SK-N-SH (cell line): ENCODE measurements at regions of chr2 and their contacts with region 1.

Region 1: GRCh38 chr2:44479122-44479887 is 117.6 kb downstream of the CAMKMT start:
- DNase-seq: peak; percentile 81
- H3K4me3 ChIP-seq: peak overlapping the region in 1 of 2 experiments; percentile 23; a peak in 1 of 4 replicates
- H3K27ac ChIP-seq: peak overlapping the region in 1 of 2 experiments; percentile 65; a peak in 2 of 4 replicates
- H3K4me1 ChIP-seq: peaks cover 0 to 12% of the 10 kb centered on the region in 2 experiments; a peak in 2 of 4 replicates
- H3K27me3 ChIP-seq: no peaks in the 10 kb centered on the region
- CTCF ChIP-seq: peak; percentile 100
- EP300 ChIP-seq: peak; percentile 15 to 49; a peak in 1 of 4 replicates
- RAD21 ChIP-seq: peak; percentile 100

Region 2: DNA sequence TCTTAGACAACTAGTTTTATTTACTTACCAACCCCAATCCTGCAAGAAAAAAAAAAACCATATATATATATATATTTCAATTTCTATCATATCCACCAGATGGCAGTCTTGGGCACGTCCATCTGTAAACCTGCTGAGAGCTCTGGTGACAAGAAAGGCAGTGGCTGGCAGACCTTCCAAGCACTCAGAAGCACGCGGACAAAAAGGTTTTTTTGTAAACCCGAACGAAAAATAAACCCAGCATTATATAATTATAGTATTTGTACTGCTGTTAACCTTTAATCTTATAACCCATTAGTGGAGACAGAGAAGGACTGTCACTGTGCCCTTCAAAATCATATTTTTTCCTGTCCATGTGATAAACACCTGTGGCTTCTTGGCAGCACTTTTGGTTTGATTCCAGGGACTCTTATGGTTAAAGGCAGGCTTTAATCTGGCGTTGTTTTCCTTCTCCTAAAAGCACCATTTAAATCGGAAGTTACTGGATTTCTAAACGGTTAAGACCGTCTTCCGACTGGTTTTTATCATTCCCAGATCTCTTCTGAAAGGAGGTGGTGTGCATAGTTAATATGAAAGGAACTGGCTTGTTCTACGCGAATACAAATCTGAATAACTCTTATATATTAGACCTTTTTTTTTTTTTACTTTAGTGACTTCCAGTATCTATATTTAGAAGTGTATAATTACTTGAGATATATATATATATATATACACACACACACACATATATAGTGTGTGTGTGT is 235.0 kb before region 1 on chr2:
- CTCF ChIA-PET with region 1: interaction called, 14 read pairs
- POLR2A ChIA-PET with region 1: no interaction called
- DNase-seq: peak; percentile 75
- H3K4me3 ChIP-seq: peak overlapping the region; percentile 43 to 55
- H3K27ac ChIP-seq: no peak overlapping the region
- H3K4me1 ChIP-seq: peaks cover 3 to 5% of the 10 kb centered on the region in 2 experiments; a peak in 2 of 4 replicates
- H3K27me3 ChIP-seq: no peaks in the 10 kb centered on the region
- CTCF ChIP-seq: peak; percentile 70
- EP300 ChIP-seq: no peak
- RAD21 ChIP-seq: peak; percentile 72

Region 3: DNA sequence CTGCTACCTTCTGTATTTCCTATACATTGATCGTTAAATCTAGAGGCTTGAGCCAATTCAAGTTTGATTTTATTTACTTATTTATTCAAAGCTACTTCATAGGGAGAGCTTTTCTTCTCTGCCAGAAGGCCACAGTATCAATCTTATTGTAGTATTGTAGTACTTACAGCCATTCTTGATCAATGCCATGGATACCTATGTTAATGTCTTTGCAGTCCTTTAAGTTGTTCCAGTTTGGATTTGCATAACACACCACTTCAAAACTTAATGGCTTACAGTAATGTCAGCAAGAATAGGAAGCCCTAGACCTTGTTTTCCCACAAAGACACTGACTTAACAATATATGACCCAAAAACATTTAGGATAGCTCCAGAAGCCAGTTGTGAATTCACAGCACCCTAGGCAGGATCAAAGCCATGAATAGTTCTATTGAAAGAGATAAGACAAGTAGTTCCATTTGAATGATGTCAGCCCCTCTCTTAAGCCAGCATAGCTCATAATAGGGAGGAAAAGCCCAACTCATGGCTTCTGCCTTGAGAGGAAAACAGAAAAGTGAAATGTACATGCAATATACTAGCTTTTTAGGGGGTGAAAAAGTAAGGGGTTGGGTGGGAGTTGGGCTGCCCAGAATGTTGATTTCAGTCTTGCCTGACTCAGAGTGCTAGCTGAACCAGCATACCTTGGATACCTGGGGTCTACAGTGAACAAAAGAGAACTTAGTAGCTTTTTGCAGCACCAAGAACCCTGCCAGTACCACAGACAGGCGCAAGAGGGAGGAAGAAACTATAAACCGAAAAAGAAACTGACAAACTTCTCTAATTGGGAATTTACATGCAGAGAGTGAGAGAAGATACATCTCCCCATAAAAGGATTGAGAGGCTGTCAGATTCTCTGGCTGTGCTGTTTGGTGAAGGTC is 16.1 kb before region 1 on chr2:
- CTCF ChIA-PET with region 1: interaction called, 81 read pairs
- POLR2A ChIA-PET with region 1: no interaction called
- DNase-seq: no peak
- H3K4me3 ChIP-seq: no peak overlapping the region
- H3K27ac ChIP-seq: no peak overlapping the region
- H3K4me1 ChIP-seq: peaks cover 0 to 8% of the 10 kb centered on the region in 2 experiments; a peak in 1 of 4 replicates
- H3K27me3 ChIP-seq: no peaks in the 10 kb centered on the region
- CTCF ChIP-seq: no peak
- EP300 ChIP-seq: no peak
- RAD21 ChIP-seq: no peak

Region 4: DNA sequence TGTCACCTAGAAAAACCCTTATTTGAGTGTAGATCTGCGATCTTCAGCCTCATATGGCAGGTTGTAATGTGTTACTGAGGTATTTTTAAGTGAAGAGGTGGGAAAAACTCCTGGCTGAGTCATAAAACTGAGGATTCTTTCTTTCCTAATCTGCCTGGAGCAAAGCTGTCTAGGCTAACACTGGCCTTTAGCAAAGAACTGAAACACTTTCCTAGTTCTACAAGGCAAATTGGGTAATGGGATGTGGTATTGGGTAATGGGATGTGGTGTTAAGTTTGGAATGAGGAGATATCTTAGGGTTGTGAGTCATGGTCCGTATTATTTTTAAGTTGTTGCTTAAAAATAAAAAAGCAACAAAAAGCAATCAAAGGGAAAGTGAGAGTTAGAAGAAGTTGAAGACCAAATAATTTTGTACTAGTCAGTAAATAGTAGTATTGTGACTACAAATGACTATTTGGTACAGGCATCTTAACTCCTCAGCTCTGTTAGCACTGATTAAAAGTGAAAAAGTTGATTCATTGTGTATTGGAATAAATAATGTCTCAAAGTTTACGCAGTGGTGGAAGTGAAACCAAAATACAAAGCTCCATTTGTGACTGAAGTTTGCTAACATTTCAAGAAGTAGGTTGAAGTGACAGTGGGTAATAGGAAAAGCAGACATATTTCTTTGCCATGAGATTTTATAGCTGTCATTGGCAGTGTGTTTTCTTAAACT is 99.3 kb after region 1 on chr2:
- CTCF ChIA-PET with region 1: interaction called, 29 read pairs
- POLR2A ChIA-PET with region 1: no interaction called
- DNase-seq: no peak
- H3K4me3 ChIP-seq: no peak overlapping the region
- H3K27ac ChIP-seq: no peak overlapping the region
- H3K4me1 ChIP-seq: peaks cover 2 to 6% of the 10 kb centered on the region in 2 experiments; a peak in 2 of 4 replicates
- H3K27me3 ChIP-seq: no peaks in the 10 kb centered on the region
- CTCF ChIP-seq: no peak
- EP300 ChIP-seq: no peak
- RAD21 ChIP-seq: no peak

Region 5: DNA sequence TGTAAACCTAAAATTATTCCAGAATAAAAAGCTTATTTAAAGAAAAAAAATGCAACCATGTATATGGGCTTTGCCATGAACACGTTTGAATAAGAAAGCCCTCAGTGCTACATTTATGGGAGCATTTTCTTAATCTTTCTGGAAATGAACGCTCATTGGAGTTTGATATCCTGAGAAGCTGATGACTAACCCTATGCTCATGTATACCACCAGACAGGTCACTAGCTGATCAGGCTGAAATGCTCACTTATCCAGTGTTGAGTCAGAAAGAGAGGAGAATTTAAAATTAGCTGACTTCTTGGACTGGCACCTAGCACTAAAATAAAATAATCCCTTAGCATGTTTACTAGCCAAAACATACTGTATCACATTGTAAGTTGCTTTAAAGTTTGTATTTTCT is 207.3 kb after region 1 on chr2:
- CTCF ChIA-PET with region 1: interaction called, 66 read pairs
- POLR2A ChIA-PET with region 1: interaction called, 3 read pairs
- DNase-seq: no peak
- H3K4me3 ChIP-seq: no peak overlapping the region
- H3K27ac ChIP-seq: peak overlapping the region; percentile 22 to 69; a peak in 3 of 4 replicates
- H3K4me1 ChIP-seq: peaks cover 4 to 75% of the 10 kb centered on the region in 2 experiments; a peak in 2 of 4 replicates
- H3K27me3 ChIP-seq: no peaks in the 10 kb centered on the region
- CTCF ChIP-seq: no peak
- EP300 ChIP-seq: no peak
- RAD21 ChIP-seq: no peak

Region 6: GRCh38 chr2:44770221-44771195 is 291.2 kb after region 1 on chr2:
- CTCF ChIA-PET with region 1: interaction called, 88 read pairs
- POLR2A ChIA-PET with region 1: no interaction called
- DNase-seq: peak; percentile 64
- H3K4me3 ChIP-seq: no peak overlapping the region
- H3K27ac ChIP-seq: peak overlapping the region in 1 of 2 experiments; percentile 99; a peak in 2 of 4 replicates
- H3K4me1 ChIP-seq: peaks cover 0 to 91% of the 10 kb centered on the region in 2 experiments; a peak in 3 of 4 replicates
- H3K27me3 ChIP-seq: no peaks in the 10 kb centered on the region
- CTCF ChIP-seq: no peak; the same call in 1 of the 2 replicates
- EP300 ChIP-seq: no peak
- RAD21 ChIP-seq: peak; percentile 46

Region 7: GRCh38 chr2:44974064-44974715 is 494.9 kb after region 1 on chr2:
- CTCF ChIA-PET with region 1: interaction called, 42 read pairs
- POLR2A ChIA-PET with region 1: no interaction called
- DNase-seq: peak; percentile 83
- H3K4me3 ChIP-seq: no peak overlapping the region
- H3K27ac ChIP-seq: no peak overlapping the region
- H3K4me1 ChIP-seq: peaks cover 0 to 7% of the 10 kb centered on the region in 2 experiments; a peak in 1 of 4 replicates
- H3K27me3 ChIP-seq: no peaks in the 10 kb centered on the region
- CTCF ChIP-seq: peak; percentile 70
- EP300 ChIP-seq: no peak
- RAD21 ChIP-seq: peak; percentile 90